CD4-positive, alpha-beta T cell (primary cell): ENCODE measurements at regions of chr3 and their contacts with region 1.

Region 1: GRCh38 chr3:114953800-114954199 is 193.3 kb downstream of the ZBTB20 start:
- DNase-seq: no peak
- ATAC-seq: no peak
- H3K4me3 ChIP-seq: no peak overlapping the region
- H3K4me3 Mint-ChIP-seq: no peak overlapping the region
- H3K27ac ChIP-seq: no peak overlapping the region
- H3K27ac Mint-ChIP-seq: no peak overlapping the region
- H3K4me1 ChIP-seq: no peaks in the 10 kb centered on the region
- H3K4me1 Mint-ChIP-seq: peaks cover 4% of the 10 kb centered on the region
- H3K27me3 ChIP-seq: no peaks in the 10 kb centered on the region
- H3K27me3 Mint-ChIP-seq: no peaks in the 10 kb centered on the region
- CTCF ChIP-seq: no peak

Region 2: GRCh38 chr3:114942773-114943172 is 11.0 kb before region 1 on chr3:
- CTCF ChIA-PET with region 1: no interaction called
- POLR2A ChIA-PET with region 1: no interaction called
- intact Hi-C with region 1: loop called (anchors 1 kb)
- DNase-seq: no peak
- ATAC-seq: no peak
- H3K4me3 ChIP-seq: no peak overlapping the region
- H3K4me3 Mint-ChIP-seq: no peak overlapping the region
- H3K27ac ChIP-seq: no peak overlapping the region
- H3K27ac Mint-ChIP-seq: no peak overlapping the region
- H3K4me1 ChIP-seq: no peaks in the 10 kb centered on the region
- H3K4me1 Mint-ChIP-seq: peaks cover 8% of the 10 kb centered on the region
- H3K27me3 ChIP-seq: no peaks in the 10 kb centered on the region
- H3K27me3 Mint-ChIP-seq: no peaks in the 10 kb centered on the region
- CTCF ChIP-seq: no peak